ENCODE measurements at regions of chr14 and their contacts with region 1.

Region 1: GRCh38 chr14:47500369-47500768 is 175.0 kb downstream of the MDGA2 start:
- DNase-seq: no peak
- H3K4me3 ChIP-seq: no peak overlapping the region
- H3K27ac ChIP-seq: no peak overlapping the region
- H3K4me1 ChIP-seq: no peaks in the 10 kb centered on the region
- H3K27me3 ChIP-seq: no peaks in the 10 kb centered on the region
- CTCF ChIP-seq: no peak
- EP300 ChIP-seq: no peak
- POLR2A ChIP-seq: no peak

Region 2: DNA sequence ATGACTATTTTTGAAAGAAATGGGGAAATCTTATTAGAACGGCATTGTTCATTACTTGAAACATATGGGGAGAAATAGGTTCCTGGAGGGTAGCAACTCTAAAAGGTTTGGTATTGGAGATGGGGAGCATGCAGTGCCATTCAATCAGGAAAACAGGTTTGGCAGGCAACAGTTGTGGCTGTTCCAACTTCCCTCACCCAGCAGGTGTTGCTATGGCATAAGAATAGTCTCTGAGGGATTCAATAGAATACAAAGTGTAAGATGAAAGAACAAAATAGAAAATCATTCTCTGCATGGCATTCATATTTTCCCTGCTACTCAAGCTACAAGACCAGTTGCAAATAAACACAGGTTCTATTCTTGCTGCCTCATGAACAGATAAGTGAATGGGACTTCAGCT is 455.5 kb before region 1 on chr14:
- intact Hi-C with region 1: loop called in 1 of 4 experiments (anchors 5 kb)
- DNase-seq: no peak
- H3K4me3 ChIP-seq: no peak overlapping the region
- H3K27ac ChIP-seq: no peak overlapping the region
- H3K4me1 ChIP-seq: no peaks in the 10 kb centered on the region
- H3K27me3 ChIP-seq: no peaks in the 10 kb centered on the region
- CTCF ChIP-seq: no peak
- EP300 ChIP-seq: no peak
- POLR2A ChIP-seq: no peak

Region 3: GRCh38 chr14:47557894-47558293 is 57.5 kb after region 1 on chr14:
- intact Hi-C with region 1: no loop called
- DNase-seq: no peak
- H3K4me3 ChIP-seq: no peak overlapping the region
- H3K27ac ChIP-seq: no peak overlapping the region
- H3K4me1 ChIP-seq: peaks cover 6% of the 10 kb centered on the region
- H3K27me3 ChIP-seq: no peaks in the 10 kb centered on the region
- CTCF ChIP-seq: no peak
- EP300 ChIP-seq: no peak
- POLR2A ChIP-seq: no peak